PC-3 (cell line): ENCODE measurements at regions of chr3 and their contacts with region 1.

Region 1: DNA sequence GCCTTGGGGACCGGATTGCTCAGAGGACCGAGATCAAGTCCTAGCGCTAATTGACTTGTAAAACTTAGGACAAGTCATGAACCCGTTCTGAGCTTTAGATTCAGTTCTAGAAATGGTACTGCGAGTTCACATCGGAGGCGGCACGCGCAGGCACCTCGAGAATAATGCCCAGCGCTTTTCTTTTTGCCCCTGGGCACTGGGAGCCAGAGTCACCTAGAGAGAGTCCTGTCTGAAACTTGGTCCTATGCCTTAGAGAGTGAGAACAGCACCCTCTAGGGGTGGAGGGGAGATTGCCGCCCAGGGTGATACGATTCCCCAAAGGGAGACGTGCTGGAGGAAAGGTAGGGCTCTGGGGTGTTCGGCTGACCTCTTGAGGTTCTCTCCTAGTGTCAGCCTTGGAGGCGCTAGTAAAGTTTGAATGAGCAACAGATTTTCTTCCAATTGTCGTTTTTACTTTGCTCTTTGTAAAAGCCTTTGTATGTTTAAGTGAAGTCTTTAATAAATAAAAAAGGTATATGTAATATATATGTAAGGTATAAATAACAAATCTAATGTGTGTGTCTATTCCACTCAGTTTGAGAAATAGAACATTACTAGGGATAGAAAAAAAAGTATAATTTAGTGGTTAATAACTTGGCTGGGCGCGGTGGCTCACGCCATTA is 826 bp downstream of the EEF1AKMT4 start:
- DNase-seq: peak; percentile 98
- ATAC-seq: peak; percentile 68
- H3K4me3 ChIP-seq: peak overlapping the region; percentile 96
- H3K27ac ChIP-seq: peak overlapping the region; percentile 63
- H3K4me1 ChIP-seq: peaks cover 2% of the 10 kb centered on the region; the same call in 1 of the 2 replicates
- H3K27me3 ChIP-seq: no peaks in the 10 kb centered on the region
- CTCF ChIP-seq: peak; percentile 96

Region 2: DNA sequence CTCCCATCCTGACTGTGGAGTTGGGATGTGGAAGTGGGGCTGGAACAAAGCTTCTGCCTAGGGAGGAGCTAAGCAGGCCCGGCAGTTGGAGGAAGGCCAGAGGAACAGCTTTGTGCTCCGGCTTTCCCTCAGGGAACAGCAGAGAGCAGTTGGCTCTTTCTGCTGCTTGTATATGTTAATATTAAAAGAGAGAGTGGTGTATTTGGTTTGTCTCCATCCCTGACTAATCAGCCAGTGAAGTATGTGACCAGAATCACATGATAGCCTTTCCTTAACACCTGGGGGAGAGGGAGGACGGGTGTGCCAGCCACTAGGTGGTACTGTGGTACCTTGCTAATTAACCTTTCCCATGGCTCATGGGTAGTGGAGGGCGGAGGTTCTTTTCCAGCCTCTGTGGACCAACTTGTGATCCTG is 105.2 kb before region 1 on chr3:
- CTCF ChIA-PET with region 1: no interaction called
- POLR2A ChIA-PET with region 1: no interaction called
- intact Hi-C with region 1: loop called (anchors 1 kb)
- DNase-seq: peak; percentile 72
- ATAC-seq: peak; percentile 92
- H3K4me3 ChIP-seq: no peak overlapping the region
- H3K27ac ChIP-seq: no peak overlapping the region
- H3K4me1 ChIP-seq: no peaks in the 10 kb centered on the region
- H3K27me3 ChIP-seq: no peaks in the 10 kb centered on the region
- CTCF ChIP-seq: peak; percentile 73

Region 3: GRCh38 chr3:184174646-184175492 is 75.4 kb before region 1 on chr3 and contains the start of gene AP2M1:
- CTCF ChIA-PET with region 1: no interaction called
- POLR2A ChIA-PET with region 1: no interaction called
- intact Hi-C with region 1: loop called (anchors 1 kb)
- DNase-seq: peak; percentile 99
- ATAC-seq: peak; percentile 86
- H3K4me3 ChIP-seq: peak within 1 kb of the TSS; percentile 89
- H3K27ac ChIP-seq: peak within 1 kb of the TSS; percentile 62
- H3K4me1 ChIP-seq: peaks cover 54% of the 10 kb centered on the region
- H3K27me3 ChIP-seq: no peaks in the 10 kb centered on the region
- CTCF ChIP-seq: peak; percentile 19; the same call in 1 of the 2 replicates
- total RNA-seq, gene AP2M1: 522 and 538 TPM in 2 replicates

Region 4: DNA sequence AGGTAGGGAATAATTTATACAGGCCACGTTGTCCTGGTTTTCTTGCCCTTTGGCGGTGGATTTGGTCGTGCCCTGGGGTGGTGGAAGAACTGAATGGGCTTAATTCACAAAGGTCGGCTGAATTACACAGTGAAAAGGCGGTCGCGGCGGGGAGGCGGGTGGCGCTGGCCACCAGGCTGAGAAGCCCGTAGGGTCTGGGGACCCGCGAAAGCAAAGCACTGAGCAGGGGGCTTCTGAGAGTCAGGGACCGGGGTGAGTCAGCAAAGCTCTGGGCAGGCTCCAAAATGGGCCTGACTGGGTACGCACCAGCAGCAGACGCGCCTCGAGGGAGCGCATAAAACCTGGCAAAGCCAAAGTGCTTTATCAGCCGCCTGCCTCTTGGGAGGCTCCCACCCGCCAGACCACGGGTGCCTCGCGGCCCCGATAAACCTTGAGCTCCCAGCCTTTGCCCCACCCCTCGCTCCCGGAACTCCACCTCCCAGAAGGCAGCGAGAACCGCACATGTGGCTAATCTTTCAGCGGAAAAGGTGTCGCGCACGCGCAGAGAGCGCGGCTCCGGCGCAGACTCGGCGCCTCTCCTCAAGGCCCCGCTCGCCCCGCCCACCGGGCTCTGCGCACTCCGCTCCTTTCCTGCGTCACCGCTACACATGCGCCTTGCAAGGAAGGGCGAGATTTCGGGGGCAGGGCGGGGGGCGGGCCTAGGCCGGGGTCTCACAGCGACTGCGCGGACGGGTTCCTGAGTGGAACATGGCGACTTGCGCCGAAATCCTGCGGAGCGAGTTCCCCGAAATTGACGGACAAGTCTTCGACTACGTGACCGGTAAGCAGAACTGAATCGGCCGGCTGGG is 64.6 kb before region 1 on chr3 and contains the start of gene ABCF3:
- CTCF ChIA-PET with region 1: no interaction called
- POLR2A ChIA-PET with region 1: no interaction called
- intact Hi-C with region 1: loop called (anchors 2 kb)
- DNase-seq: peak; percentile 99
- ATAC-seq: peak; percentile 94
- H3K4me3 ChIP-seq: peak within 1 kb of the TSS; percentile 97
- H3K27ac ChIP-seq: peak within 1 kb of the TSS; percentile 78
- H3K4me1 ChIP-seq: peaks cover 17% of the 10 kb centered on the region
- H3K27me3 ChIP-seq: no peaks in the 10 kb centered on the region
- CTCF ChIP-seq: no peak
- total RNA-seq, gene ABCF3: 84.7 and 85.5 TPM in 2 replicates

Region 5: GRCh38 chr3:184298759-184299496 is 48.6 kb after region 1 on chr3 and contains the start of gene PSMD2:
- CTCF ChIA-PET with region 1: no interaction called
- POLR2A ChIA-PET with region 1: no interaction called
- intact Hi-C with region 1: loop called (anchors 2 kb)
- DNase-seq: peak; percentile 97
- ATAC-seq: peak; percentile 89
- H3K4me3 ChIP-seq: peak within 1 kb of the TSS; percentile 100
- H3K27ac ChIP-seq: peak within 1 kb of the TSS; percentile 80
- H3K4me1 ChIP-seq: peaks cover 20% of the 10 kb centered on the region
- H3K27me3 ChIP-seq: no peaks in the 10 kb centered on the region
- CTCF ChIP-seq: no peak
- total RNA-seq, gene PSMD2: 1,057 and 1,393 TPM in 2 replicates